Aorta (tissue), 5 donors: ENCODE measurements at regions of chr1 and their contacts with region 1.

Region 1: GRCh38 chr1:152189657-152190442 is 30.8 kb upstream of the RPTN start:
- DNase-seq: peak; percentile 65 to 83
- ATAC-seq: peak; percentile 80
- H3K4me3 ChIP-seq: peak overlapping the region in 1 of 2 donors; percentile 42
- H3K27ac ChIP-seq: no peak overlapping the region
- H3K4me1 ChIP-seq: peaks cover 0 to 3% of the 10 kb centered on the region in 2 donors
- H3K27me3 ChIP-seq: no peaks in the 10 kb centered on the region

Region 2: DNA sequence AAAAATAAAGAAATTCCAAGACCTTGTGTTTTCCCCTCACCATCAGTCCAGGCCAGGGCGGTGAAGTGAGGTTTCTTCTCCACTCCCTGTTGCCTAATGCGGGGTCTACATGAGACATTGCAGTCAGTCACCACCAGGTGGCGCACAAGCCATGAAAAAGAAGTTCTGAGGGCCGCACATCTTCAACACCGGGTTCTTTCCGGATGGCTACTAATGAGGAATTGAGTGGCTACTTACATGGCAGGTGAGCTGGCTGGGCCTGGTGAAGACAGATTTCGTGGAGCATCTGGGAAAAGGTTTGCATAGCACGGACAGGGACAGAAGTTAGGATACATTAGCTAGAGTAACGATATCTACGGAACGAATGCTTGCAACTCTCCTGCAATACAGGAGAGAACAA is 137.2 kb before region 1 on chr1:
- intact Hi-C with region 1: loop called in 1 of 2 experiments (anchors 2 kb)
- DNase-seq: peak; percentile 91 to 96
- ATAC-seq: peak; percentile 76
- H3K4me3 ChIP-seq: no peak overlapping the region
- H3K27ac ChIP-seq: no peak overlapping the region
- H3K4me1 ChIP-seq: no peaks in the 10 kb centered on the region
- H3K27me3 ChIP-seq: no peaks in the 10 kb centered on the region

Region 3: GRCh38 chr1:152141974-152142584 is 47.8 kb before region 1 on chr1:
- intact Hi-C with region 1: loop called in 1 of 2 experiments (anchors 2 kb)
- DNase-seq: peak in 1 of 2 donors; percentile 58
- ATAC-seq: no peak
- H3K4me3 ChIP-seq: no peak overlapping the region
- H3K27ac ChIP-seq: no peak overlapping the region
- H3K4me1 ChIP-seq: no peaks in the 10 kb centered on the region
- H3K27me3 ChIP-seq: no peaks in the 10 kb centered on the region

Region 4: GRCh38 chr1:152440635-152441471 is 251.0 kb after region 1 on chr1:
- intact Hi-C with region 1: loop called (anchors 5 kb)
- DNase-seq: peak; percentile 74 to 85
- ATAC-seq: peak; percentile 87
- H3K4me3 ChIP-seq: no peak overlapping the region
- H3K27ac ChIP-seq: no peak overlapping the region
- H3K4me1 ChIP-seq: no peaks in the 10 kb centered on the region
- H3K27me3 ChIP-seq: no peaks in the 10 kb centered on the region

Region 5: DNA sequence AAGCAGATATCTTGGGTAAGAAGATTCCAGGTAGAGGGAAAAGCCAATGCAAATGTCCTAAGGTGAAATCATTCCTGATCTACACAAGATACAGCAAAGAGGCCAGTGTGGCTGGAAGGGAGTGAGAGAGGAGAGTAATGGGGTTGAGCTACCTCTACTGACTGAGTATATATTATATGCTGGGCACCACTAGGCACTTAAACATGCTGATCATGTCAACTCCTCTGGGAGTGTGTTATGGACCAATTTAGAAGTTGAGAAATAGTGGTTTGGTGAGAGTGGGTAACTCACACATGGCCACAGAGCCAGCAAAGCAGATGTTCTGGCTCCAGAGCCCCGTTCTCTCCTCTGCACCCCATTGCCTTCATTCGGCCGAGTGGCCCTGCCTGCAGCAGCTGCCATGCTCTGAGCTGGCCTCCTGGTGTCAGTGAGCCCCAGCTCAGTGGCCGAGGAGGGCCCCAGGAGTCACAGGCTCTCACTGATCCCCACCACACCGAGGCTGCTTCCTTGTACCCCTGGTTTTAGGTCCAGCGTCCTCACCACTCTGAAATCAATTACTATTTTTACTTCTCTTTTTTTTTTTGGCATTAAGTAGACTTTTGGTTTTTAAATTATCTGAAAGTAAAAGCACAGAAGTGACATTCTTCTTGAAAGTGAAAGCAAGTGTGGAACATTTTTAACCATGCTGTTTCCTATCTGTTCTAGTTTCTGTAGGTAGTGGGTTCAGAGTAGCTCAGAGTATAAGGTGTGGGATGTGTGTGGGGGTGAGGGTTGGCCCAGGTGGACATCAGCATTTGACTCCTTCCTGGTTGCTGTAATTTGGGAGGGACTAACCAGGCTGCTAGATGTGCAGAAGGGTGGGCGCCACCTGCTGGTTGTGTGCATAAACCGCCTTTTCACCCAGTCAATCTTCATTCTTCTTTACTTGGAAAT is 270.0 kb after region 1 on chr1:
- intact Hi-C with region 1: loop called (anchors 1 to 5 kb)
- DNase-seq: peak; percentile 84 to 90
- ATAC-seq: peak; percentile 68
- H3K4me3 ChIP-seq: peak overlapping the region in 1 of 2 donors; percentile 11
- H3K27ac ChIP-seq: no peak overlapping the region
- H3K4me1 ChIP-seq: peaks cover 0 to 2% of the 10 kb centered on the region in 2 donors
- H3K27me3 ChIP-seq: no peaks in the 10 kb centered on the region